Tibial artery (tissue), 4 donors: ENCODE measurements at regions of chr3 and their contacts with region 1.

Region 1: DNA sequence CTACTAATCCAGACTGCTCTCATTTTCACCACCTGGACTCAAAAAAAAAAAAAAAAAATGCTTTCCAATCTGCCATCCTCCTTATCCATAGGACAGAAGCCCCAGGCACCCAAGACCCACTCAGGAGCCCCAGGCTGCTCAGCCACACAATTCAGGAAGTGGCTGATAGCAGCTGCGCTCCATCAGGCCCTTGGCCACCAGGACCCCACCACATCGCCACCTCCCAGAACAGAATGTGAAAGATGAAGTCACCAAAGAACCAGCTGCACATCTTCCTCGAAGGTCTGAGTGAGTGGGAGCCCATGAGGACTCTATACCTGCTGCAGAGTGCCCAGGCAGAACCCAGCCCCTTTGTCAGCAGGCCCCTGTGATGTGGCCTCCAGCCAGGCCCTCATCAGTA is 19.5 kb downstream of the POC1A start:
- DNase-seq: no peak
- H3K4me3 ChIP-seq: no peak overlapping the region
- H3K27ac ChIP-seq: no peak overlapping the region
- H3K4me1 ChIP-seq: peaks cover 0 to 9% (median 2%) of the 10 kb centered on the region in 4 donors
- H3K27me3 ChIP-seq: no peaks in the 10 kb centered on the region
- CTCF ChIP-seq: no peak

Region 2: DNA sequence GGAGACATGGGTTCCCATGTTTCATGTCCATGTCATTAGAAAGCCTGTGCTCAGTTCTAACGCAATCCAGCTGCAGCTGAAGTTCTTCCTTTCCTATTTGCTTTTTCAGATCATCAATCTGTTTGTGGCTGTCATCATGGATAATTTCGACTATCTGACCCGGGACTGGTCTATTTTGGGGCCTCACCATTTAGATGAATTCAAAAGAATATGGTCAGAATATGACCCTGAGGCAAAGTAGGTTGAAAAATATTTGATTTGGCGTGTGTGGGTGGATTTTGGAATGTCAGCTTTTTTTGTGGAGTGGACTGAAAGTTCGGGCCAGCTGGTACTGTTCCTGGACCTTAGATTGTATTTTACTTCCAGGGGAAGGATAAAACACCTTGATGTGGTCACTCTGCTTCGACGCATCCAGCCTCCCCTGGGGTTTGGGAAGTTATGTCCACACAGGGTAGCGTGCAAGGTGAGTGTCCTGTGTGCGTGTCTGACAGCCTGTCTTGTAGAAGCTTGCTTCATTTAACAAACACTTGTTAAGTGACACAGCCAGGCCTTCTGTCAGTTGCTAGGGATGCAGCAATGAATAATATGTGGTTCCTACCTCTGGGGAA is 1641.8 kb after region 1 on chr3:
- intact Hi-C with region 1: loop called (anchors 5 kb)
- DNase-seq: no peak
- H3K4me3 ChIP-seq: no peak overlapping the region
- H3K27ac ChIP-seq: peak overlapping the region in 1 of 2 donors; percentile 7
- H3K4me1 ChIP-seq: peaks cover 0 to 35% (median 29%) of the 10 kb centered on the region in 4 donors
- H3K27me3 ChIP-seq: no peaks in the 10 kb centered on the region
- CTCF ChIP-seq: no peak